Heart right ventricle (tissue), 16 donors: ENCODE measurements at regions of chr12 and their contacts with region 1.

Region 1: DNA sequence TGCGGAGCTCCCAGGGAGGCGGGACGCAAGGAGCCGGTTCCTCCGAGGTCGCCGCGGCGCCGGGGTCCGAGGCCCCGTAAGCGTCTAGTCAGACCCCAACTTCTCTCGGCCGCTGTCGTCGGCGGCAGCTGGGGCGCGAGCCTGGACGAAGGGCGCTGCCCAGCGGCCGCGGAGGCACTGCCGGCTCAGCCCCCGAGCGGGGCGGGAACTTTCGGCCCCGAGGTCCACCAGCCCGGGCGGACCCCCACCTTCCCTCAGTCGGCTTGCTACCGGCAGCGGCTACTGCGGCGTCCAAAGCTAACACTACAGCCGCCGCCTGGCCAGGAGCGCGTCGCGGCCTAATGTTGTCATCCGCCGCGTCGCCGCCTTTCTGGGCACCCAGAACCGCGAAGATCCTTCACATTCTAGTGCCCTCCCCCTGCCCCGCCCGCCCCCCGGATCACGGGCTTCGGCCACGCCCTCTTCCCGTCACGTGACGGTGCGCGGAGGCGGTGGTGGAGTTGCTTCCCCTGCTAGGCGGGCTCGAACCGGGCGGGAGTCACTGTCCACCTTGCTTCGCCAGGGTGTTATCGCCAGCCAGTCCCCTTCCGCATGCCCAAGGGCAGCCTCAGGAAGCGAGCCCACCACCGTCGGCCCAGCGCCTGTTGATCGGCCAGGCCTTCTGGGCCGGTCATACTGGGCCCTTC is at the start of gene OSBPL8:
- DNase-seq: peak; percentile 96 to 97
- ATAC-seq: peak; percentile 97 to 99 (median 98)
- H3K4me3 ChIP-seq: peak within 1 kb of the TSS; percentile 84 to 97 (median 94)
- H3K27ac ChIP-seq: peak within 1 kb of the TSS; percentile 67 to 99 (median 94)
- H3K4me1 ChIP-seq: peaks cover 0 to 49% (median 32%) of the 10 kb centered on the region in 9 donors
- H3K27me3 ChIP-seq: no peaks in the 10 kb centered on the region
- CTCF ChIP-seq: peak in 5 of 9 donors; percentile 32 to 68 (median 62)
- total RNA-seq, gene OSBPL8: 25.5 to 50.0 (median 37.0) TPM

Region 2: GRCh38 chr12:76374386-76375020 is 185.0 kb before region 1 on chr12:
- intact Hi-C with region 1: loop called in 1 of 10 experiments (anchors 10 kb)
- DNase-seq: no peak
- ATAC-seq: no peak
- H3K4me3 ChIP-seq: no peak overlapping the region
- H3K27ac ChIP-seq: no peak overlapping the region
- H3K4me1 ChIP-seq: no peaks in the 10 kb centered on the region
- H3K27me3 ChIP-seq: no peaks in the 10 kb centered on the region
- CTCF ChIP-seq: no peak

Region 3: GRCh38 chr12:76462668-76463224 is 96.8 kb before region 1 on chr12:
- intact Hi-C with region 1: loop called in 5 of 10 experiments (anchors 5 to 10 kb)
- DNase-seq: no peak
- ATAC-seq: no peak
- H3K4me3 ChIP-seq: no peak overlapping the region
- H3K27ac ChIP-seq: no peak overlapping the region
- H3K4me1 ChIP-seq: peaks cover 0 to 42% (median 14%) of the 10 kb centered on the region in 9 donors
- H3K27me3 ChIP-seq: no peaks in the 10 kb centered on the region
- CTCF ChIP-seq: no peak

Region 4: DNA sequence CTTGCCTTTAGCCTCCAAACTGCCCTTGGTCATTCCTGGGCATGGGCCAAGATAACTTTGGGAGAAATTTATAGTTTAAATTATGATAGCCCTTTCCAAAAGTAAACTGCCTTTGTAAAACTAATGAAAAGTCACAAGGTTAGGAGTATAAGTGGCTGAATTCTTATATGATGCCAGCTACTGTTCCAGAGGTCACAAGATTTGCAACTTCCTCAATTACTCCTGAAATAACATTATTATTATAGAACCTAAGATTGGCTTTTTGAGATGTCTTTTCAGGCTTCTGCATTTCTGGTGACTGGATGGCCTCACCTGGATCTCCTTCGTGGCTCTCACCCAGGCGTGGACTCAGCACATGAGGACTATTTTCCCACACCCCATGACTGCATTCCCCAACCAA is 54.9 kb before region 1 on chr12:
- intact Hi-C with region 1: no loop called
- DNase-seq: no peak
- ATAC-seq: no peak
- H3K4me3 ChIP-seq: no peak overlapping the region
- H3K27ac ChIP-seq: no peak overlapping the region
- H3K4me1 ChIP-seq: peaks cover 0 to 13% (median 0%) of the 10 kb centered on the region in 9 donors
- H3K27me3 ChIP-seq: no peaks in the 10 kb centered on the region
- CTCF ChIP-seq: no peak